GM18951 (cell line): ENCODE measurements at regions of chr4 and their contacts with region 1.

Region 1: GRCh38 chr4:81844717-81845116 is 373.0 kb upstream of the RASGEF1B start:
- POLR2A ChIP-seq: no peak

Region 2: GRCh38 chr4:81466841-81467671 is 377.7 kb before region 1 on chr4:
- in situ Hi-C with region 1: loop called (anchors 5 kb)
- POLR2A ChIP-seq: no peak

Region 3: DNA sequence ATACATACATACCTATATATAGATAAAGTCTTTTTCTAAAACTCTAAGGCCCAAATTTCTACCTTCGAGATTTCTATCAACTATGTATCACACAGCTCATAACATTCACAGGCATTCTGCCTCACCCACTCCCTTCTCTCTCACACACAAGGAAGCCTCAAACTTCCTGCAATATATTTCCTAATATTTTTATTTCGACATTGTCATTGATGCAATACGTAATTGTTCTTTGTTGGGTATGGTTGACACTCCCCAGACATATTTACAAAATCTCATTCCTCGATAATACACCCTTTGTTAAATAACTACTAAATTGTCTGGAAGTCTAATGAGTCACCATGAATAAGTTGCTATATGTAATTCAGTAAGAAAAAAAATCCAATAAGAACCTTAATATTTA is 385.6 kb after region 1 on chr4:
- in situ Hi-C with region 1: no loop called
- POLR2A ChIP-seq: no peak

Region 4: DNA sequence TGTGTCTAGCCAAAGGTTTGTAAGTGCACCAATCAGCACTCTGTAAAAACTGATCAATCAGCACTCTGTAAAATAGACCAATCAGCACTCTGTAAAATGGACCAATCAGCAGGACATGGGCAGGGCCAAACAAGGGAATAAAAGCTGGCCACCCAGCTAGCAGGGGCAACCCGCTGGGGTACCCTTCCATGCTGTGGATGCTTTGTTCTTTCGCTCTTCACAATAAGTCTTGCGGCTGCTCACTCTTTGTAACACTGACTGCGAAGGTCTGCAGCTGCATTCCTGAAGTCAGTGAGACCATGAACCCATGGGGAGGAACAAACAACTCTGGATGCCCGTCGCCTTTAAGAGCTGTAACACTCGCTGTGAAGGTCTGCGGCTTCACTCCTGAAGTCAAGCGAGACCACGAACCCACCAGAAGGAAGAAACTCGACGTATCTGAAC is 571.2 kb after region 1 on chr4:
- in situ Hi-C with region 1: no loop called
- POLR2A ChIP-seq: no peak